Heart right ventricle (tissue), 16 donors: ENCODE measurements at regions of chr9 and their contacts with region 1.

Region 1: DNA sequence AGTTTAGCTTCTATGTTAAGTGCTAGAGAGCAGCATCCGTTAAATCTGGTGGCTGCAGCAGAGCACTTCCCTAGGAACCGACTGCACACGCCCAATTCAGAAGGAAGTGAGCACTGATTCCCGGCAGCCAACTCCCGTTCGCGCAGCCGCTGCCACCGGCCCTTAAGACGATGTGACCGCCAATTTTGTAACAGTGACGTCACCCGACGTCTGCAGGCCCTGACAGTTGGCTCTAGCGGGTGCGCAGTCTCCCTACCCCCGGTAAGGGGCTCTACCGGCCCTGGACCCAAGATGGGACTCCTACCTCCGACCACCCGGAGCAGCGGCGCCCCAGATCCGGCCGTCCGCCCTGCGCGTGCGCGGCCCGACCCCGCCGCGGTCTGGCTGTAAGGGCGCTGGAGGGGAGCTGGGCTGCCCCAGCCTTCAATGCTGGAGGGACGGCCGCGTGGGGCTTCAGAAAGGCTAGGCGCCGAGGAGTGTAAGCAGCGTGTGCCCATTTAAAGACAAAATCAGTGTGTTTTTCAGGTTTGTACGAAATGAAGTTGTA is 19.1 kb downstream of the DNAJA1 start:
- DNase-seq: peak; percentile 80 to 90
- ATAC-seq: peak; percentile 94 to 96 (median 95)
- H3K4me3 ChIP-seq: peak overlapping the region; percentile 34 to 77 (median 70)
- H3K27ac ChIP-seq: peak overlapping the region; percentile 89 to 97 (median 94)
- H3K4me1 ChIP-seq: peaks cover 3 to 45% (median 7%) of the 10 kb centered on the region in 9 donors
- H3K27me3 ChIP-seq: no peaks in the 10 kb centered on the region
- CTCF ChIP-seq: no peak

Region 2: GRCh38 chr9:33024966-33025571 is 19.1 kb before region 1 on chr9 and contains the start of gene DNAJA1:
- intact Hi-C with region 1: loop called in 1 of 10 experiments (anchors 2 kb)
- DNase-seq: peak; percentile 94 to 96
- ATAC-seq: peak; percentile 97 to 98 (median 98)
- H3K4me3 ChIP-seq: peak within 1 kb of the TSS; percentile 73 to 100 (median 94)
- H3K27ac ChIP-seq: peak within 1 kb of the TSS; percentile 97 to 100 (median 99)
- H3K4me1 ChIP-seq: peaks cover 11 to 64% (median 54%) of the 10 kb centered on the region in 9 donors
- H3K27me3 ChIP-seq: no peaks in the 10 kb centered on the region
- CTCF ChIP-seq: no peak
- total RNA-seq, gene DNAJA1: 46.7 to 90.4 (median 54.7) TPM

Region 3: DNA sequence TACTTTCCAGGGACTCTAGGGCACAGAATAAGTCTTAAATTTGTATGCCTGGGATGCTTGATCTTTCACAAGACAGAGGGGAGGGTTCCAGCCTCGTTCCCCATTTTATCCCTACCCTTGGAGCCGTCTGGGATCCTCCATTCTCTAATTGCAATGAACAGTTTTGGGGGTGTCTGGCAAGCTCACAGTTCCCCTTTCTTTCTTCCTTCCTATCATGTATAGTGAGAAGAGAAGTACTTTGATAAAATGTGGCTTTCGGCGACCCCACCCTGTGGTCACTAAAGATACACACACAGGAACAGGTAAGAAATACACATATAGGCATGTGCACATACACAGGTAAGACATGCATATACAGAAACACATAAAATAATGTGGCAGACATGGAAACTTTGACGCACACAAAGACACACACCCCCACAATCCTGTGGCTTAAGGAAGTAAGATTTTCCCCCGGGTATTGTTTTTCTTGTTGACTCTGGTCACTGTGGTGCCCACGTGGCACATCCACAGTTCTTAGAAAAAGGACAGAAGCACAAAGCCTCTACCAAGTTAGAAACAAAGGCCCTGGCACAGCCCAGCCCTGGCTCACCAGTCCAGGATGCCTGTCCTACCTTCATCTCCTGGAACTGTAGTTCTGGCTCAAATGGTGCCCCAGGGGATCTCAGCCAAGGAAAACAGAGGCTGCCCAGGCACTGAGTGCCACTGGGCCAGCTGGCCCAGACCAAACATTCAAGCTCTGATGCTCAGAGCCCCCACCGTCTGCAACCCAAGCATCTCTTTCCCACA is 38.5 kb after region 1 on chr9:
- intact Hi-C with region 1: no loop called
- DNase-seq: no peak
- ATAC-seq: peak; percentile 11 to 62 (median 34)
- H3K4me3 ChIP-seq: no peak overlapping the region
- H3K27ac ChIP-seq: peak overlapping the region in 4 of 10 donors; percentile 3 to 66 (median 20)
- H3K4me1 ChIP-seq: peaks cover 0 to 30% (median 16%) of the 10 kb centered on the region in 9 donors
- H3K27me3 ChIP-seq: no peaks in the 10 kb centered on the region
- CTCF ChIP-seq: no peak

Region 4: DNA sequence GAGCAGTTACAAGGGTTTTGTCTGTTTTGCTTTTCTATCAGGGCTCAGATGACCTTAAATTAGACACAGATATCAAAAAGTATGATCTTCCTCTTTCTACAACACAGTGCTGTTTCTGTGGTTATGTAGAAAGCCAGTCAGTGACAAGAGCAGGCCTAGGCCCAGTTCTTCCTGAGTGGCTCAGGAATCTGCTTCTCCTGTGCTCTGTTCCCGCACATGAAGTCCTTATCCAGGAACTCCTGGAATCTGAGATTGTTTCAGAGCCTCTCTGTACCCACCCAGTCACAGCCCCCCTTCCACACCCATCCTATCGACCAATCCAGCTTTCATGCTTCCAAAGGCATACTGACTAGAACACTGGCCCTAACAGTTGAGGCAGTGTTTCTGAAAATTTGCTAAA is 72.7 kb after region 1 on chr9:
- intact Hi-C with region 1: no loop called
- DNase-seq: no peak
- ATAC-seq: peak in 6 of 8 donors; percentile 22 to 87 (median 56)
- H3K4me3 ChIP-seq: no peak overlapping the region
- H3K27ac ChIP-seq: peak overlapping the region in 8 of 10 donors; percentile 6 to 80 (median 60)
- H3K4me1 ChIP-seq: peaks cover 5 to 59% (median 34%) of the 10 kb centered on the region in 9 donors
- H3K27me3 ChIP-seq: no peaks in the 10 kb centered on the region
- CTCF ChIP-seq: no peak

Region 5: DNA sequence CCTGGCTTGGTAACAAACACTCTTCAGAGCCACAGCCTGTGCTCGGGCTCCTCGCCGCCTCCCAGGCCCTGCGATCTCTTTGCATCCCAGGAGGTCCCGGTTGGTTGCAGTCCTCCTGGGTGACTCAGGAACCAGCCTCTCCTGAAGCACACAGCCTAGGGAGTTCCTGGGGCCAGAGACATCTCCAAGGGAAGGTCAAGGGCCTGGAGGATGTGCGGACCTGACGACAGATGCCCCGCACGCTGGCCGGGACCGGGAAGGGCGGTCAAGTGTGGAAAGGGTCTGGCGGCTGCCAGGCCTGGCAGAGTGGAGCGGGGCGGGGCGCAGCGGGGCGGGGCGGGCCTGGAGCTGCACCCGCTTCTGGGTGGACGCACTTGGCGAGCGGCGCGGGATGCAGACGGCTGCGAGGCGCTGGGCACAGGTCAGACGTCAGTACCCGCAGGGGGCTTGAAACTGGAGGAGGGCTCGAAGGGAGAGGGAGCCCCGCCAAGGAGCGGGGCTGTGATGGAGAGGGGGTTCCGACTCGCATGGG is 706.2 kb after region 1 on chr9:
- intact Hi-C with region 1: no loop called
- DNase-seq: peak in 1 of 2 donors; percentile 30
- ATAC-seq: peak in 5 of 8 donors; percentile 34 to 86 (median 52)
- H3K4me3 ChIP-seq: peak overlapping the region in 8 of 10 donors; percentile 2 to 31 (median 18)
- H3K27ac ChIP-seq: no peak overlapping the region
- H3K4me1 ChIP-seq: peaks cover 0 to 14% (median 7%) of the 10 kb centered on the region in 9 donors
- H3K27me3 ChIP-seq: peaks cover 0 to 75% (median 62%) of the 10 kb centered on the region in 7 donors
- CTCF ChIP-seq: no peak